GM10248 (cell line): ENCODE measurements at regions of chr20 and their contacts with region 1.

Region 1: DNA sequence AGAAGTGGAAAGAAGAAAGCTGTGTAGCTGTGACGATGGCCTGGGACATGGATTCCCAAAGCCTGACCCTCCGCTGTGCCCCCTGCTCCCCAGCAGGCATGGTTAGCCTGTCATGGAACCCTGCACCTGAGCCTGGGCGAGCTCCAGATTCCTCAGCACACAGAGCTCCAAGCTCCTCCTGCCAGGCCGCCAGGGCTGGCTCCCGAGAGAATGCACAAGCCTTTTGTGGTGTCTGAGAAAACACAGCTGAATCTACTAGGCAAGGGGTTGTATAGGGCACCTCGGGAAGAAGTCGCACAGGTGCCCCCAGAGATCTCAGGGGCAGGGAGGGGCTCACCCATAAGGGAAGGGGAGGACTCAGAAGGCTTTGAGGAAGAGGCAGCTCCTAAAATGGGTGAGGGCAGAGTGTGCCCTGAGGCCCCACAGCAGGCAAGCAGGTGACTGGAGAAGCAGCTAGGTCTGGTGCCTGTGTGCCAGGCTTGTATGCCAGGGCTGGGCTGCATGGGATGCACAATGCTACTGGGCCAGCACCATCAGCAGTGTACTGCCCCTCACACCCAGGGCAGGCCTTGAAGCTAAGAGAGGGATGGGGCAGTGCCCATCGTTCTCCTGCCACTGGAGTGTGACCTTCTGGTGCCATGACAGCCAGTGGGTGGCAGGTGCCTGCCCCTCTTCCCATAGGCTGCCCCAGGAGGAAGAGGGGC is 64.3 kb upstream of the CD93 start:
- DNase-seq: no peak
- CTCF ChIP-seq: no peak

Region 2: GRCh38 chr20:23132930-23133559 is 17.4 kb before region 1 on chr20:
- CTCF ChIA-PET with region 1: no interaction called
- POLR2A ChIA-PET with region 1: no interaction called
- DNase-seq: no peak
- CTCF ChIP-seq: no peak

Region 3: GRCh38 chr20:23161244-23161891 is 10.9 kb after region 1 on chr20:
- CTCF ChIA-PET with region 1: interaction called, 12 read pairs
- POLR2A ChIA-PET with region 1: no interaction called
- DNase-seq: no peak
- CTCF ChIP-seq: no peak

Region 4: DNA sequence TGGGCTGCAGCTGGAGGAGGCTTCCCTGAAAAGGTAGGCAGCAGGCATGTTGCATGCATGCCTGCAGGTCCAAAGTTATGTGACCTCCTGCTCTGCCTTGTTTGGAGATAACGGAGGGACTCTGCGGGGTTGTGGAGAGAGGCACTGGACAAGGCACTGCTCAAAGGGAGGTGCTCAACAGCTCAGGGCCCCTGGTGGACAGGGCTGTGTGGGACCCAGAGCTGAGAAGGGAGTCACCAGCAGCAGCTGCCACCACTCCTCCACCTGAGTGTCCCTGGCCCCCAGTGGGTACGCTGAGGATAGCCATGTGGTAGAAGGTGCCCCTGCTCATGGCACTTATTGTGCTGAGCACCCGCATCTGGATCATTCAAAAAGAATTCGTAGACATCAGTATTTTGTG is 324.9 kb after region 1 on chr20:
- CTCF ChIA-PET with region 1: no interaction called
- POLR2A ChIA-PET with region 1: no interaction called
- DNase-seq: no peak
- CTCF ChIP-seq: no peak